ENCODE measurements at regions of chr9 and their contacts with region 1.

Region 1: GRCh38 chr9:126024581-126025230 is 277.5 kb downstream of the PBX3 start:
- DNase-seq: no peak
- H3K4me3 ChIP-seq: no peak overlapping the region
- H3K27ac ChIP-seq: no peak overlapping the region
- H3K4me1 ChIP-seq: no peaks in the 10 kb centered on the region
- H3K27me3 ChIP-seq: no peaks in the 10 kb centered on the region
- CTCF ChIP-seq: no peak
- POLR2A ChIP-seq: no peak

Region 2: DNA sequence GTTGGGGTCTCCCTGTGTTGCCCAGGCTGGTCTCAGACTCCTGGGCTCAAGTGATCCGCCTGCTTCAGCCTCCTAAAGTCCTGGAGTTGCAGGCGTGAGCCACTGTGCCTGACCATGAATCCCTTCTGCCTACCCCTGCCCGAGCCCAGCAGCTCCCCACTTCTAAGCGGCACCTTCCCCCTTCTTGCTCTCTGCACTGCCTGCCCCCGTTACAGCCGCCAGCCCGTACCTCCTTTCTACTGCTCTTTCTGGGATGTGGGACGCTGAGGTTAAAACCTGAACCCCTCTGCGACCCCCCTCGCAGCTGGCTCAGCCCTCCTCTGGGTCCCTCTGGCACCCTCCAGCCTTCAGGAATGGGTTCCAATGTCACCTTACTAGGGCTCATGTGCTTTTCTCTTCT is 27.9 kb before region 1 on chr9:
- intact Hi-C with region 1: loop called (anchors 1 kb)
- DNase-seq: no peak
- H3K4me3 ChIP-seq: no peak overlapping the region
- H3K27ac ChIP-seq: no peak overlapping the region
- H3K4me1 ChIP-seq: no peaks in the 10 kb centered on the region
- H3K27me3 ChIP-seq: peaks cover 0 to 11% of the 10 kb centered on the region in 2 donors
- CTCF ChIP-seq: no peak
- POLR2A ChIP-seq: no peak